Lower leg skin (tissue), 4 donors: ENCODE measurements at regions of chr2 and their contacts with region 1.

Region 1: GRCh38 chr2:1546023-1546591 is 132.8 kb downstream of the TPO start:
- DNase-seq: no peak
- H3K4me3 ChIP-seq: no peak overlapping the region
- CTCF ChIP-seq: peak in 1 of 3 donors; percentile 14
- POLR2A ChIP-seq: no peak

Region 2: GRCh38 chr2:505941-506340 is 1040.2 kb before region 1 on chr2:
- intact Hi-C with region 1: no loop called
- DNase-seq: peak in 1 of 2 donors; percentile 29
- H3K4me3 ChIP-seq: no peak overlapping the region
- CTCF ChIP-seq: no peak
- POLR2A ChIP-seq: no peak

Region 3: DNA sequence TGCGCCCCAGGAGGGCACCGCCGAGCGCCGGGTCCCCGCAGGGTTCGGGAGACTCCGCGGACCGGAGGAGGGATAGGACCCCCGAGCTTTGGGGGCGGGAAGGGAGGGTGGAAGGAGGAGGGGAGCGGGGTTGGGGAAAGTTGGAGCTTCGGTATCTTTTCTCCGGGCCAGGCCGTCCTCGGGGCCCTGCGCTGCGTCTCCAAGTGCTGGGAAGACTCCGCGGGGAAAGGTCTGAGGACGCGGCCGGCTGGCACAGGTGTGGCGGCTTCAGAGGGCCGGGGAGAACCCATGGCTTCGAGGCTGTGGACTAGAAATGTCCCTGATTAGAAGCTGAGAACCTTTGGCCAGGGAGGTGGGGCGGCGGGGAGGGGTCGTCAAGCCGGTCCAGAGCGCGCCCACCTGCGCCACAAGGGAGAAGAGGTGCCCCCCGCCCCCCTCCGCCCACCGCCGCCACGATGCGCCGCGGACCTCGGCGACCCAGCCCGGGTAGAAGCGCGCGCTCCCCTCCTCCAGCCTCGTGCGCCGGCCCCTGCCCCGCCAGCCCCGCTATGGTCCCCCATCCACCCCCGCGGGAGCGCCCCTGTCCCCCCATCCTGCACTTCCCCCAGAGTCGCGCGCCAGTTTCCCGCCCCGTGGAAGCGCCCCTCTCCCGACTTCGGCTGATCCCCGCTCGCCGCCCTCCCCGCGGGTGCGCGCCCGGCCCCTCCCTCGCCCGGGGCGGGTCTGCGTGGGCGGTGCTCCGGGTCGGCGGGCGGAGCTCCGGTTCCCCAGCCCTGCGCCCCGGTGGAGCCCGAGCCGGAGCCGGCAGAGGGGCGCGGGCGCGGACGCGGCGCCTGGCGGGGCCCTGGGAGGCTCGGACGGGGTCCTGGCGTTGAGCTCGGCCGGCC is 595.8 kb before region 1 on chr2 and contains the start of gene SNTG2:
- intact Hi-C with region 1: loop called (anchors 10 kb)
- DNase-seq: peak in 1 of 2 donors; percentile 86
- H3K4me3 ChIP-seq: peak within 1 kb of the TSS; percentile 10
- CTCF ChIP-seq: no peak
- POLR2A ChIP-seq: no peak
- total RNA-seq, gene SNTG2: 1.4 to 15.3 (median 6.3) TPM

Region 4: GRCh38 chr2:1581965-1582625 is 36.0 kb after region 1 on chr2:
- intact Hi-C with region 1: no loop called
- DNase-seq: no peak
- H3K4me3 ChIP-seq: no peak overlapping the region
- CTCF ChIP-seq: no peak
- POLR2A ChIP-seq: no peak